Left lung (tissue), 14 donors: ENCODE measurements at regions of chr16 and their contacts with region 1.

Region 1: GRCh38 chr16:25135254-25135878 is 23.8 kb downstream of the LCMT1 start:
- DNase-seq: no peak
- ATAC-seq: no peak
- H3K4me3 ChIP-seq: no peak overlapping the region
- H3K27ac ChIP-seq: no peak overlapping the region
- H3K4me1 ChIP-seq: no peaks in the 10 kb centered on the region
- H3K27me3 ChIP-seq: no peaks in the 10 kb centered on the region
- CTCF ChIP-seq: no peak

Region 2: DNA sequence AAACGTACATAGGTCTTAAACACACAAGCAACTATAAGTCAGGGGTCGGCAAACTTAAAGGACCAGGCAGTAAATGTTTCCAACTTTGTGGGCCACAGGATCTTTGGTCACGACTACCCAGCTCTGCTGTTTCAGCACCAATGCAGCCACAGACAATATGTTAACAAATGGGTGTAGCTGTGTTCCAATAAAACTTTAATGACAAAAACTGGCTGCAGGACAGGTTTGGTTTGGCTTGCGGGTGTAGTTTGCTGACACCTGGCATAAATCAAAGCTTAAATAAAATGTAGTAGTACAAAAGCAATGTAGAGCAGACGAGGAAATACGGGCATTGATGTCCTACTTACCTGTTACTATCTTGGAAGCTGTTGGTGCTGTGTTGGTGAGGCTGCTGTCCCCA is 204.9 kb before region 1 on chr16:
- intact Hi-C with region 1: no loop called
- DNase-seq: no peak
- ATAC-seq: no peak
- H3K4me3 ChIP-seq: no peak overlapping the region
- H3K27ac ChIP-seq: no peak overlapping the region
- H3K4me1 ChIP-seq: no peaks in the 10 kb centered on the region
- H3K27me3 ChIP-seq: no peaks in the 10 kb centered on the region
- CTCF ChIP-seq: no peak

Region 3: DNA sequence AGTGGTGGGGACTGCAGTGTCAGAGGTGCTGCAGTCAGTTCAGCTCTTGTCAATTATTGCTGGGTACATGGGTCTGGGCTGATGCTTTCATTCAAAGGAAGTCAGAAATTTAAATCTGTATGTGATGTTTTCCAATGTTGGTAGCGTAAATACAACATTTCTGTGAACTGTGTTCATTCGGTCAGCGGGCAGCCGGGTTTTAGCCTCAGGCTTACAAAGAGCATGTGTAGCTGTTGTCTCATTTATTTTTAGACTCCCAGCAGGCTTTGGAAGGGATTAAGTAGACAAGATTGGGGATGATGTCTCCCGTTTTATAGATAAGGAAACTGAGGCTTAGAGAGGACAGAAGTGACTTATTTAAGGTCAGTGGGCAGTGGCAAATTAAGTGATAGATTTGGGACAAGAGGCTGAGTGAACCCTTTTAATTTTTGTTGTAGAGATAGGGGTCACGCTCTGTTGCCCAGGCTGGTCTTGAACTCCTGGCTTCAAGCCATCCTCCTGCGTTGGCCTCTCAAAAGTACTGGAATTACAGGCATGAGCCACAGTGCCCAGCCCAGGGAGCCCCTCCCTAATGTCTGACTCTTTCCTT is 89.5 kb after region 1 on chr16:
- intact Hi-C with region 1: loop called in 1 of 2 experiments (anchors 10 kb)
- DNase-seq: no peak
- ATAC-seq: no peak
- H3K4me3 ChIP-seq: no peak overlapping the region
- H3K27ac ChIP-seq: no peak overlapping the region
- H3K4me1 ChIP-seq: no peaks in the 10 kb centered on the region
- H3K27me3 ChIP-seq: no peaks in the 10 kb centered on the region
- CTCF ChIP-seq: no peak